HepG2 (cell line): ENCODE measurements at regions of chr12 and their contacts with region 1.

Region 1: GRCh38 chr12:34022079-34022830 is at the start of gene ALG10:
- DNase-seq: peak; percentile 95
- ATAC-seq: peak; percentile 100
- H3K4me3 ChIP-seq: peak within 1 kb of the TSS; percentile 69 to 86 (median 82)
- H3K27ac ChIP-seq: peak within 1 kb of the TSS; percentile 75
- H3K4me1 ChIP-seq: 0 out of 2 replicates have a peak, but pooled peaks cover 14% of the 10 kb centered on the region
- H3K27me3 ChIP-seq: no peaks in the 10 kb centered on the region; a peak in 1 of 5 replicates
- CTCF ChIP-seq: peak; percentile 68
- EP300 ChIP-seq: peak in 1 of 2 experiments; percentile 30; a peak in 1 of 4 replicates
- POLR2A ChIP-seq: peak; percentile 51 to 60; a peak in 2 of 4 replicates
- RAD21 ChIP-seq: peak; percentile 43
- total RNA-seq, gene ALG10: 13.1 and 17.4 TPM in 2 replicates

Region 2: DNA sequence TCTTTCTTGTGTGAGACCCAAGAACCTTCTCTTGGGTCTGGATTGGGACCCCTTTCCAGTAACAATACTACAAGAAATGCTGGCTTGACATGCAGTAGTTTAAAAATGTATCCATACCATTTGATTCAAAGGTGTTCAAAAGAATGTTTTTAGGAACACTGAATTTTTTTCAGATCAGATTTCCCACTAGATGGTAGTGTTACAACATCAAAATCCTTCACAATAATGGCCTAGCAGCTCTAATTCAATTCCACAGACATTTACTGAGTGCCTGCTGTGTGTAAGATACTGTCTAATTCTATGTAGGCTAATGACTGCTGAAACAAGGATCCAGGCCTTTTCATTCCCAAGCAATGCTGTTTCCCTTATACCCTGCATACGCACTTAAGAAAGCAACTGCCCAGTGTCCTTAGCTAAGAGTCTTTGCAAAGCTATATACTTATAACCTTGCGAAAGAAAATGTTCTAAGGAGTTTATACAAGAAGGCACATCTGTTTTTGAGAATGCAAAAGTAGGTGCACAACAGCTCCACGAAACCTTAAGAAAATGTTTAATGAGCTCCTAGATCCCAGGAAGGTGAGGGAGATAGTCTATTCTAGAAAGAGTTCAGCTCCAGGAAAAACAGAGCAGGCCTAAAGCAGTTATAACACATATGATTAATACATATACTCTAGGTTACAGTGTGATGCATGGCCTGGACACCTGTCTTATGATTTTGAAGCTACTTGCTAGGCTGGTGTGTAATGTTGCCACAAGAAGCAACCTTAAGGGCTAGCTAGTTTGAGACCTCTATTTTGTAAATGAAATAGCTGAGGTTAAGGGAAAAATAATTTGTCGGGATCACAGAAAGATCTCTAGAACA is 1074.8 kb before region 1 on chr12:
- CTCF ChIA-PET with region 1: no interaction called
- POLR2A ChIA-PET with region 1: interaction called, 4 read pairs
- in situ Hi-C with region 1: loop called (anchors 25 kb)
- intact Hi-C with region 1: no loop called
- DNase-seq: peak; percentile 9
- ATAC-seq: 0 out of 3 replicates have a peak, but pooled peaks have one; percentile 31
- H3K4me3 ChIP-seq: no peak overlapping the region
- H3K27ac ChIP-seq: no peak overlapping the region
- H3K4me1 ChIP-seq: no peaks in the 10 kb centered on the region
- H3K27me3 ChIP-seq: no peaks in the 10 kb centered on the region
- CTCF ChIP-seq: peak; percentile 36
- EP300 ChIP-seq: no peak
- POLR2A ChIP-seq: no peak
- RAD21 ChIP-seq: no peak

Region 3: GRCh38 chr12:33427072-33427471 is 595.2 kb before region 1 on chr12:
- CTCF ChIA-PET with region 1: no interaction called
- POLR2A ChIA-PET with region 1: no interaction called
- in situ Hi-C with region 1: no loop called
- intact Hi-C with region 1: loop called (anchors 5 kb)
- DNase-seq: peak; percentile 18
- ATAC-seq: peak; percentile 67
- H3K4me3 ChIP-seq: no peak overlapping the region
- H3K27ac ChIP-seq: no peak overlapping the region
- H3K4me1 ChIP-seq: no peaks in the 10 kb centered on the region
- H3K27me3 ChIP-seq: no peaks in the 10 kb centered on the region
- CTCF ChIP-seq: peak; percentile 23; the same call in 1 of the 2 replicates
- EP300 ChIP-seq: no peak
- POLR2A ChIP-seq: no peak
- RAD21 ChIP-seq: no peak